ENCODE measurements at regions of chr7 and their contacts with region 1.

Region 1: GRCh38 chr7:101586078-101586905 is 42.8 kb downstream of the MYL10 start:
- DNase-seq: peak; percentile 72 to 89
- H3K4me3 ChIP-seq: no peak overlapping the region
- H3K4me3 Mint-ChIP-seq: peak overlapping the region; percentile 44
- H3K27ac Mint-ChIP-seq: peak overlapping the region; percentile 74
- H3K4me1 ChIP-seq: peaks cover 56% of the 10 kb centered on the region
- H3K4me1 Mint-ChIP-seq: peaks cover 48% of the 10 kb centered on the region
- H3K27me3 ChIP-seq: no peaks in the 10 kb centered on the region
- H3K27me3 Mint-ChIP-seq: no peaks in the 10 kb centered on the region
- CTCF ChIP-seq: peak in 1 of 2 experiments; percentile 28

Region 2: GRCh38 chr7:101550641-101551541 is 35.4 kb before region 1 on chr7:
- CTCF ChIA-PET with region 1: no interaction called
- POLR2A ChIA-PET with region 1: no interaction called
- intact Hi-C with region 1: loop called (anchors 2 kb)
- DNase-seq: peak; percentile 47 to 55
- H3K4me3 ChIP-seq: no peak overlapping the region
- H3K4me3 Mint-ChIP-seq: no peak overlapping the region
- H3K27ac Mint-ChIP-seq: no peak overlapping the region
- H3K4me1 ChIP-seq: 0 out of 2 replicates have a peak, but pooled peaks cover 3% of the 10 kb centered on the region
- H3K4me1 Mint-ChIP-seq: peaks cover 8% of the 10 kb centered on the region
- H3K27me3 ChIP-seq: no peaks in the 10 kb centered on the region
- H3K27me3 Mint-ChIP-seq: no peaks in the 10 kb centered on the region
- CTCF ChIP-seq: no peak

Region 3: DNA sequence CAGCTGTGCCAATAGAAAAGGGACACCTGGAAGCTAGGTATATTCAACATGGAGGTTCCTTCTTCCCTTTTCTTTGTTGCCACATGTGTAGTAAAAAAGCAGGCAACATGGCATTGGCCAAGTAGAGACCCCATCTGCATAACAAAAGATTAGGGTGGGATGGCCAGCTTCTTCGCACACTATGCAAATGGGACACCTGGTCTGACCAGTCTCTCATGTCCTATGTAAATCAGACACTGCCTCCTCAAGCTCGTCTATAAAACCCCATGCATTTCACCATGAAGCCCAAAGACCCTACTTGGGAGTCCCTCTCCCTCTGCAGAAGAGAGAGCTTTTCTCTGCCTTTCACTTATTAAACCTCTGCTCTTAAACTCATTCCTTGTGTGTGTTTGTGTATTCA is 11.1 kb before region 1 on chr7:
- CTCF ChIA-PET with region 1: no interaction called
- POLR2A ChIA-PET with region 1: no interaction called
- intact Hi-C with region 1: loop called (anchors 1 kb)
- DNase-seq: peak; percentile 62 to 66
- H3K4me3 ChIP-seq: no peak overlapping the region
- H3K4me3 Mint-ChIP-seq: peak overlapping the region; percentile 29
- H3K27ac Mint-ChIP-seq: peak overlapping the region; percentile 81
- H3K4me1 ChIP-seq: peaks cover 10% of the 10 kb centered on the region
- H3K4me1 Mint-ChIP-seq: peaks cover 30% of the 10 kb centered on the region
- H3K27me3 ChIP-seq: no peaks in the 10 kb centered on the region
- H3K27me3 Mint-ChIP-seq: no peaks in the 10 kb centered on the region
- CTCF ChIP-seq: no peak

Region 4: DNA sequence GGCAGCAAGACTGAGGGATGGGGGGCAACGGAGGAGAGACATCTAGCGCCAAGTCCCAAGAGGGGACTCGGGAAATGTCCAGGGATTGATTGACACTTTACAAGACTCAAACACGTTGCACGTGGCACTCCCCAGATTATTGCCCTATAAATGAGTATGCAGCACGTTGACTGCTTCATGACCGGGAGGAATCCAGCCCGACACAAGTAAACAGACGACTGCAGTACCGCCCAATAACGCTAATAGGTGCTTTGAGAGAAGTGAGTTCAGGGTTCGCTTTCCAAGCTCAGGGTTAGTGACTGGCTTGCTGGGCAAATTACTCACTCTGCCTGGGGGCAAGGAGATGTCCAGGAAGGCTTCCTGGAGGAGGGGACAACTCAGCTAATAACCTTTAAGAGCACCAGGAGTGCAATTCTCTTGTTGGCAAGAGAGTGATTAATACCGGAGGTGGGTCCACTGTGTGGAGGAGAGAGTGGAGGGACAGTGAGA is 116.1 kb after region 1 on chr7:
- CTCF ChIA-PET with region 1: no interaction called
- POLR2A ChIA-PET with region 1: no interaction called
- intact Hi-C with region 1: no loop called
- DNase-seq: peak; percentile 53 to 80
- H3K4me3 ChIP-seq: no peak overlapping the region
- H3K4me3 Mint-ChIP-seq: no peak overlapping the region
- H3K27ac Mint-ChIP-seq: no peak overlapping the region
- H3K4me1 ChIP-seq: peaks cover 11% of the 10 kb centered on the region; the same call in 1 of the 2 replicates
- H3K4me1 Mint-ChIP-seq: peaks cover 33% of the 10 kb centered on the region
- H3K27me3 ChIP-seq: no peaks in the 10 kb centered on the region
- H3K27me3 Mint-ChIP-seq: no peaks in the 10 kb centered on the region
- CTCF ChIP-seq: peak in 1 of 2 experiments; percentile 5